Activated CD4-positive, alpha-beta memory T cell treated with anti-CD3 and anti-CD28 coated beads for 36 hours (primary cell): ENCODE measurements at regions of chr2 and their contacts with region 1.

Region 1: DNA sequence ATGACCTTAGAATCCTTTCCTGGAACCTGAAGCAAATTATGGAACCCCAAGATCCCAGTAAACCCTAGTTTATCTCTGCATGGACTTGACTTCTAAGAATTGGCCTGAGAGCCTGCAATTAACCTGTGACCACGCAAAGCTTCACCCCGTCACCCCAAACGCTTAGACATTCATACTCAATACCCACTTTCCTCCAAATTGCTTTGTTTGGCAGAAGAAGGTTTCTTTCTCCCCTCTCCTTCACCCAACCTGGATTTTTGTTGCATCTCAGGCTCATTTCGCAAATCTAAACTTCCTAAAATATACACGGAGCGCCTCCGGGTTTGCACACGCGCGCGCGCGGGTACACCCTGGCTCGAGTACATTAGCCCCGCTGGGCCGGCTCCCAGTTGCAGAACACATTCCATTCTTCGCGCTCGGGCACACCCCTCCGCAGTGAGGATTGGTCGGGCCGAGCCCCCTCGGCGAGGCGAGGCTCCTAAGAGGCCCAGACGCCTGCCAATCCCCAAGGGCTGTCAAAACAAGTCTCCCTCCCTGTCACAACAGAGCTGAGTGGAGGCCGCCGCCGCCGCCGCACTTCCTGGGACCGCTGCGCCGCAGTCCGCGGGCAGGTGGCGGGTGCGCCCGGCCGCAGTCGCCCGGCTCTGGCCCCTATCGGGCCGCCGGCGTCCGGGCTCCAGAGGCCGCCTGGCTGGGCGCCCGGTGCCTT is at the start of gene PLCL1:
- DNase-seq: peak; percentile 95
- H3K4me3 Mint-ChIP-seq: peak within 1 kb of the TSS; percentile 90
- H3K27ac Mint-ChIP-seq: peak within 1 kb of the TSS; percentile 67
- H3K4me1 Mint-ChIP-seq: peaks cover 38% of the 10 kb centered on the region
- H3K27me3 Mint-ChIP-seq: peaks cover 4% of the 10 kb centered on the region
- total RNA-seq, gene PLCL1: 1.7 to 1.9 TPM

Region 2: DNA sequence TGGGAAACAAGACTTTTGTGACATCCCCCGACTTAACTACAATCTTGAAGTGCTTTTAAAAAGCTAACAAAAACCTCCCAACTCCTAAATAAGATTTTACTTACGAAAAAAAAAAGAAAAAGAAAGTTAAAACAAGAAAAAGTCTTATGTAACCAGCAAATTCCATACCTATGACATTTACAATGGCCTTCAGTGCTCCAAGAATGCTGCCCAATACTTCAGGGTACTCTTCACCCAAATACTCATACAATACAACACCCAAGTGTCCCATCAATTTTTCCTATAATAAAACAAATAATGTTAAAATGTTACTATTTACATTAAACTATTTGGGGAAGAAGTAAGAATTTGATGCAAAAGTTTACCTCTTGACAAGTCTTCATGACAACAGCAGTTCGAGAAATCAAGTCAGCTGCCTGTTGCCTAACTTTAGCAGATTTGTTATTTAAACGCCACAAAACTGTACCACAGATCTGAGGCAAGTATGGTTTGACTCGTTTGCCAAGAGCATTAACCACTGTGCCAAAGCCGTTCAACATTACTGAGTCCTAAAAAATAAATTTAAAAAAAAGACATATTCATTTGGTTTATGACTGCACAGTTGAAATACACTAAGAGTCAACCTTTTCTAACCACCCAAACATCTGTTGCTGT is 404.2 kb before region 1 on chr2:
- CTCF ChIA-PET with region 1: no interaction called
- POLR2A ChIA-PET with region 1: no interaction called
- intact Hi-C with region 1: no loop called
- DNase-seq: no peak
- H3K4me3 Mint-ChIP-seq: no peak overlapping the region
- H3K27ac Mint-ChIP-seq: no peak overlapping the region
- H3K4me1 Mint-ChIP-seq: no peaks in the 10 kb centered on the region
- H3K27me3 Mint-ChIP-seq: no peaks in the 10 kb centered on the region

Region 3: GRCh38 chr2:197740200-197740599 is 64.0 kb before region 1 on chr2:
- CTCF ChIA-PET with region 1: no interaction called
- POLR2A ChIA-PET with region 1: no interaction called
- intact Hi-C with region 1: no loop called
- DNase-seq: no peak
- H3K4me3 Mint-ChIP-seq: no peak overlapping the region
- H3K27ac Mint-ChIP-seq: no peak overlapping the region
- H3K4me1 Mint-ChIP-seq: no peaks in the 10 kb centered on the region
- H3K27me3 Mint-ChIP-seq: no peaks in the 10 kb centered on the region

Region 4: DNA sequence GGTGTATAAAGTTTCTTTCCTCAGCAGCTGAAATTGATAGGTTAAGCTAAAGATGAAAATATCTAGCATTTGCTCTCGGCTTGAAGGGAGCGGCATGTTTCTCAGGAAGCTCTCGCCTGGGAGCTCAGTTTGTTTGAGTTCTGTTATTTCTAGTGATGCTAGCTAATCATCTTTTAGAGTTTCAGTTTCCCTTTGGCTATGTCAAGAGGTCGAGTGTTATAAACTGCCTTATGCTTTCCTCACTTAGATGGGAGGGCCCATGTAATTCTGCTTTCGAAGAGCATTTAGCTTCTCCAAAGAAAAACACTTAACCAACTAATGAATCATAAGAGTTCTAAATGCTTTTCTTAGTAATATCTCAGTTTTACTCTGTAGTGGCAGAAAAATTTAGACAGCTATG is 33.8 kb after region 1 on chr2:
- CTCF ChIA-PET with region 1: interaction called, 9 read pairs
- POLR2A ChIA-PET with region 1: no interaction called
- intact Hi-C with region 1: loop called (anchors 1 kb)
- DNase-seq: peak; percentile 41
- H3K4me3 Mint-ChIP-seq: peak overlapping the region; percentile 52
- H3K27ac Mint-ChIP-seq: peak overlapping the region; percentile 71
- H3K4me1 Mint-ChIP-seq: peaks cover 46% of the 10 kb centered on the region
- H3K27me3 Mint-ChIP-seq: no peaks in the 10 kb centered on the region

Region 5: GRCh38 chr2:197952540-197953202 is 148.5 kb after region 1 on chr2:
- CTCF ChIA-PET with region 1: no interaction called
- POLR2A ChIA-PET with region 1: no interaction called
- intact Hi-C with region 1: loop called (anchors 2 kb)
- DNase-seq: peak; percentile 37
- H3K4me3 Mint-ChIP-seq: no peak overlapping the region
- H3K27ac Mint-ChIP-seq: no peak overlapping the region
- H3K4me1 Mint-ChIP-seq: peaks cover 46% of the 10 kb centered on the region
- H3K27me3 Mint-ChIP-seq: no peaks in the 10 kb centered on the region

Region 6: GRCh38 chr2:198042189-198042588 is 238.0 kb after region 1 on chr2:
- CTCF ChIA-PET with region 1: no interaction called
- POLR2A ChIA-PET with region 1: no interaction called
- intact Hi-C with region 1: loop called (anchors 2 kb)
- DNase-seq: no peak
- H3K4me3 Mint-ChIP-seq: no peak overlapping the region
- H3K27ac Mint-ChIP-seq: no peak overlapping the region
- H3K4me1 Mint-ChIP-seq: peaks cover 24% of the 10 kb centered on the region
- H3K27me3 Mint-ChIP-seq: no peaks in the 10 kb centered on the region

Region 7: DNA sequence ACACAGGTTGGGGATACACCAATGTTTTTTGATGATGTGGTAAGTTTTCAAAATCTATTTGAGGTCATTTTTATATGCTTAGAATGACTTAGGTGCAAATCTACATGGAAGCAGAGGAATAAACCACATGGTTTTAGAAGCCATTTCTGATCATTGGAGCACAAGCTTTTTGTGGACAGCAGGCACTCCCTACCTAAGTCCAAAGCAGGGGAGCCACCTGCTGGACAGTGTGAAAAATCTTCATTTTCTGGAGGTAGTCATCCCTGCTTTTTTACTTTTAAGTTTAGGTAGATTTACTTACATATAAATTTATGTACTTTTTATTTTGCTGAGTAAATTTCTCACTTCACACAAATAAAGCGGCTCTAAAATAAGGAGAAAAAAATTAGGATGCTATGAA is 323.4 kb after region 1 on chr2:
- CTCF ChIA-PET with region 1: interaction called, 32 read pairs
- POLR2A ChIA-PET with region 1: no interaction called
- intact Hi-C with region 1: loop called (anchors 1 kb)
- DNase-seq: peak; percentile 59
- H3K4me3 Mint-ChIP-seq: no peak overlapping the region
- H3K27ac Mint-ChIP-seq: no peak overlapping the region
- H3K4me1 Mint-ChIP-seq: no peaks in the 10 kb centered on the region
- H3K27me3 Mint-ChIP-seq: no peaks in the 10 kb centered on the region